ENCODE measurements at regions of chr1 and their contacts with region 1.

Region 1: DNA sequence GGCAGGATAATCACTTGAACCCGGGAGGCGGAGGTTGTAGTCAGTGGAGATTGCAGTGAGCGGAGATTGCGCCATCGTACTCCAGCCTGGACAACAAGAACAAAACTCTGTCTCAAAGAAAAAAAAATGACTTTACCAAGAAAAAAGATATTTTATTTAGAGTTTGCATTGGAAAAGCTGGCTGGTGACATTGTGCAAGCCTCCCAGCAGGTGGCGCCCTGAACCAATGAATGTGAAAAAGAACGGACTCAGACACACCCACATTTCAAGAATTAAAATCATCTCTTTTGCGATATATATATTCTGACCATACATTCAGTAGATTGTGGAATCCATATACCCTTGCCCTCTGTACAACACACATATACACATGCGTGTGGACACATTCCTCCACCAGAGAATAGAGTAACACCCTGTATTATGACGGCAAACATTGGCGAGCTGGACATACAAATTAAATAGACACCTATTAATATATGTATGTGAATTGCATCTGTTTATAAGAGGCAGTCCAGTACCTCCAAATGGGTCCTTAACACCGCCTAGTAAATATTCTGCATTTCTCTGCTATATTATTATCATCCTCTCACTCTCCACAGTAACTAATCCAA is 39.0 kb upstream of the CADM3 start:
- DNase-seq: peak; percentile 80
- H3K4me3 Mint-ChIP-seq: no peak overlapping the region
- H3K27ac Mint-ChIP-seq: no peak overlapping the region
- H3K4me1 Mint-ChIP-seq: no peaks in the 10 kb centered on the region
- H3K27me3 Mint-ChIP-seq: peaks cover 2% of the 10 kb centered on the region

Region 2: GRCh38 chr1:159122005-159122621 is 10.3 kb before region 1 on chr1:
- CTCF ChIA-PET with region 1: interaction called, 15 read pairs
- POLR2A ChIA-PET with region 1: no interaction called
- intact Hi-C with region 1: no loop called
- DNase-seq: peak; percentile 13
- H3K4me3 Mint-ChIP-seq: no peak overlapping the region
- H3K27ac Mint-ChIP-seq: no peak overlapping the region
- H3K4me1 Mint-ChIP-seq: peaks cover 18% of the 10 kb centered on the region
- H3K27me3 Mint-ChIP-seq: peaks cover 26% of the 10 kb centered on the region

Region 3: GRCh38 chr1:159152031-159152430 is 19.7 kb after region 1 on chr1:
- CTCF ChIA-PET with region 1: interaction called, 13 read pairs
- POLR2A ChIA-PET with region 1: no interaction called
- intact Hi-C with region 1: no loop called
- DNase-seq: no peak
- H3K4me3 Mint-ChIP-seq: no peak overlapping the region
- H3K27ac Mint-ChIP-seq: no peak overlapping the region
- H3K4me1 Mint-ChIP-seq: no peaks in the 10 kb centered on the region
- H3K27me3 Mint-ChIP-seq: peaks cover 44% of the 10 kb centered on the region

Region 4: DNA sequence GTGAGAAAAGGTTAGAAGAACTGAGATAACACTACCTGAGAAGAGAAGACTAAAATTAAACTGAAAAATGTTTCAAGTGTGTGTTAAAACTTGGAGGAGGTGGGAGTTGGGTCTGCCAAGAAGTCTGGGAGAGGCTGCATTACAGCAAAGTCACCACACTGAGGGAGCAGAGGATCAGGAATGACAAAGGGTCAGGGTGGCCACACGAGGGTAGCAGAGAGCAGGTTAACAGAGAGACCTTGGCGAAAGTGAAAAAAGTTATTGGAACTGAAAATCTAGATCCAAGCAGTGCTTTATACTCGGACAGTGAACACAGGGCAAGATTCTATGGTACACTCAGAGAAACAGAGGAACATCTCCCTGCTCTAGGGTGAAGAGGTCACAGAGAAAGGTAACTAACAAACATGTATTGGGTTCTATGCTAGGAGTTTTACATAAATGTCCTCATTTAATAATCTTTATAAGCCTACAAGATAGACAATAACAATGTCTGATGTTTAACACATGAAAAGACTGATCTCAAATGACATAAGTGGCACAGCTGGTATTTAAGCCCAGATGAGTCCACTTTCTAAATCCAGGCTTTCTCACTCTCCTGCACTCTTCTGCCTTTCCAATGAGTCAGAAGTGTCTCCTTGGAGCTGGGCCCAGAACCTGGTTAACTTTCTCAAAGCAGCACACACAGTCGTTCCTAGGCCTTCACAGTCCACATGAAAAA is 28.8 kb after region 1 on chr1:
- CTCF ChIA-PET with region 1: interaction called, 27 read pairs
- POLR2A ChIA-PET with region 1: no interaction called
- intact Hi-C with region 1: loop called (anchors 1 kb)
- DNase-seq: peak; percentile 77
- H3K4me3 Mint-ChIP-seq: no peak overlapping the region
- H3K27ac Mint-ChIP-seq: no peak overlapping the region
- H3K4me1 Mint-ChIP-seq: peaks cover 2% of the 10 kb centered on the region
- H3K27me3 Mint-ChIP-seq: peaks cover 38% of the 10 kb centered on the region

Region 5: GRCh38 chr1:159197561-159198557 is 65.5 kb after region 1 on chr1:
- CTCF ChIA-PET with region 1: interaction called, 36 read pairs
- POLR2A ChIA-PET with region 1: no interaction called
- intact Hi-C with region 1: loop called (anchors 1 kb)
- DNase-seq: peak; percentile 75
- H3K4me3 Mint-ChIP-seq: no peak overlapping the region
- H3K27ac Mint-ChIP-seq: no peak overlapping the region
- H3K4me1 Mint-ChIP-seq: peaks cover 2% of the 10 kb centered on the region
- H3K27me3 Mint-ChIP-seq: peaks cover 36% of the 10 kb centered on the region

Region 6: GRCh38 chr1:159214149-159214760 is 81.9 kb after region 1 on chr1:
- CTCF ChIA-PET with region 1: interaction called, 116 read pairs
- POLR2A ChIA-PET with region 1: no interaction called
- intact Hi-C with region 1: loop called (anchors 1 kb)
- DNase-seq: peak; percentile 54
- H3K4me3 Mint-ChIP-seq: no peak overlapping the region
- H3K27ac Mint-ChIP-seq: no peak overlapping the region
- H3K4me1 Mint-ChIP-seq: no peaks in the 10 kb centered on the region
- H3K27me3 Mint-ChIP-seq: peaks cover 29% of the 10 kb centered on the region

Region 7: DNA sequence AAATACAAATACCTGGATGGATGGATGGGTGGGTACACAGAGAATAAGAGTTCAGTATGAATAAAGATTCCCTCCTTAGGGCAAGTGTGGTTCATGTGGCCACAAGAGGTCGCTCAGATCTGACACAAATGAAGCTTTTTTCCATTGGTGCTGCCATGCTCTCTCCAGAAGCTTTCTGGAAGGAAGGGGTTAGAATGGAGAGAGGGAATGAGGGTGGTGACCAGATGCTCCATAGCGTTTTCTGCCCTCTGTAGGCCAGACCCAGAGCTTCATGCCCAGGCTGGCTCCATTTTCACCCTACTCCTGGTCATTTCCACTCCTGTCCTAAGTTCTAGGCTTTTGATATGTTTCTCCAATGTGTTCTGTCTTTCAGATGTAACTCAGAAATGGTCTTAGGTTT is 666.5 kb after region 1 on chr1:
- CTCF ChIA-PET with region 1: interaction called, 3 read pairs
- POLR2A ChIA-PET with region 1: no interaction called
- intact Hi-C with region 1: loop called (anchors 10 kb)
- DNase-seq: peak; percentile 61
- H3K4me3 Mint-ChIP-seq: no peak overlapping the region
- H3K27ac Mint-ChIP-seq: no peak overlapping the region
- H3K4me1 Mint-ChIP-seq: peaks cover 13% of the 10 kb centered on the region
- H3K27me3 Mint-ChIP-seq: peaks cover 3% of the 10 kb centered on the region